Naive thymus-derived CD4-positive, alpha-beta T cell (primary cell): ENCODE measurements at regions of chr1 and their contacts with region 1.

Region 1: DNA sequence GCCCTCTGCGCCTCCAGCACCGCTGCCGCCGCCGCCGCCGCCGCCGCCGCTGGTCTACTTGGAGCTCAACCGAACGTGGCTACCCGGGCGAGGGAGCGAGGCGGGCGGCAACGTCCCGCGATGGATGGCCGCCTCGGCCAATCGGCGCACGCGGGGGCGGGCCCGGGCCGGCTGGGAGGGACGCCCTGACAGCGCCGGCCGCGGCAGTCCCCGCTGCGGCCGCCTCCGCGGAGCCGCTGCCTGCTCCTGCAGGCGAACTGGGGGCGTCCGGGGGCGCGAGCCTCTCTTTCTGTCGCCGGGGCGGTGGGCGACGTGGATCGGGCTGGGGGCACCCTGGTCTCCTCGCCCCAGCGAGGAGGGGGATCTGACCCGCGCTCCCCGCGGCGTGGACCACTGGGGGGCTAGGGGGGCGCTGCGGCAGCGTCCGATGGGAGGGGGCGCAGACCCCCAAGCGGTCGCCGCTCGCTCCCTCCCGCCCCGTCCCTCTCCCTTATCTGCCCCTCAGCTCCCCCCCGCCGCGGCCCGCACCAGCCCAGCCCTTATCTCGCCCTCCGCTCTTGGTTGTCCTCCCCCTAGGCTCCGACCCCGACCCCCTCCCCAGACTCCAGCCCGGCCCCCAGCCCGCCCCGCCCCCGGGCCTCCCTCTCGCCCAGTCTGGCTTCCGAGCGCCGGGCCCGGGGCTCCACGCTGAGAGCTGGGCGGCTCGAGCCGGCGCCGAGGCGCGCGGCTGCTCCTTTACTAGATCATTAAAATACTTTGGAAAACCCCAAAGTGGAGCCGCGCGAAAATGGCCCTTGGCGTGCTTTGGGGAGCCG is at the start of gene SSBP3:
- DNase-seq: peak; percentile 89 to 96 (median 93)
- ATAC-seq: peak; percentile 95
- H3K4me3 ChIP-seq: peak within 1 kb of the TSS; percentile 76
- H3K4me3 Mint-ChIP-seq: peak within 1 kb of the TSS; percentile 92 to 99 (median 96)
- H3K27ac ChIP-seq: peak within 1 kb of the TSS; percentile 93
- H3K27ac Mint-ChIP-seq: peak within 1 kb of the TSS; percentile 84 to 97 (median 91)
- H3K4me1 ChIP-seq: peaks cover 40 to 44% of the 10 kb centered on the region in 2 donors
- H3K4me1 Mint-ChIP-seq: peaks cover 59 to 74% (median 69%) of the 10 kb centered on the region in 7 donors
- H3K27me3 ChIP-seq: no peaks in the 10 kb centered on the region
- H3K27me3 Mint-ChIP-seq: no peaks in the 10 kb centered on the region
- total RNA-seq, gene SSBP3: 69.4 to 124 (median 98.1) TPM

Region 2: DNA sequence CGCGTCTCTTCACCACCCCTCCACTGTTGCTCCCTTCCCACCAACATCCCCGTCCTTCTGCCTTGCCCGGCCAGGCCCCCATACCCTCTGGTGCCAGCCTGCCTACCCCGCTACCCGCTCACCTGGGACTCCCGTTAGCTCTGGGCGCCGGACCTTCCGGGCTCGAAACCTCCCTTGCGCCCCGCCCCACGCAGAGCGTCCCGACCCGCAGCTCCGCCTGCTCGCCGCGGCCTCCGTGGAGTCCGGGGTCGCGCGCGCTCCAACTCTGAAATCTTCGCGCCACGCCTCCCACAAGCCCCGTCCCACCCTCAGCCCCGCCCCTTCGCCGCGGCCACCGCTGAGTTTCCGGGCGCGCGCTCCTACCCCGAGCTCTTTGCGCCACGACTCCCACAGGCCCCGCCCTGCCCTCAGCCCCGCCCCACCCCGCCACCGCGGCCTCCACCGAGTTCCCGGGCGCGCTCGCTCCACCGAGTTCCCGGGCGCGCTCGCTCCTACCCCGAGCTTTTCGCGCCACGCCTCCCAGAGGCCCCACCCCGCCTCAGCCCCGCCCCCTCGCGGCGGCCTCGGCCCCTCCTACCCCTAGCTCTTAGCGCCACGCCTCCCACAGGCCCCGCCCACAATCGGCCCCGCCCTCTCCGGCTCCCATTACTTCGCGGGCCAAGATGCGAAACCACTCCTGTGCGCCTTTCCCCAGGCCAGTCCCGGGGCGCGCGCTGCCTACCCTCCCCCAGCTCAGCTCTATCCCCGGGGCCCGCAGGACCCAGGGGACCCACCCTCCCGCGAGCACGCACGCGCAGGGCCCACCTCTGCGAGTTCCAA is 460.9 kb before region 1 on chr1 and contains the start of gene IFT25:
- CTCF ChIA-PET with region 1: no interaction called
- POLR2A ChIA-PET with region 1: no interaction called
- intact Hi-C with region 1: loop called (anchors 2 kb)
- DNase-seq: peak; percentile 96 to 100 (median 99)
- ATAC-seq: peak; percentile 92
- H3K4me3 ChIP-seq: peak within 1 kb of the TSS; percentile 70
- H3K4me3 Mint-ChIP-seq: peak within 1 kb of the TSS; percentile 91 to 97 (median 96)
- H3K27ac ChIP-seq: peak within 1 kb of the TSS; percentile 83
- H3K27ac Mint-ChIP-seq: peak within 1 kb of the TSS; percentile 83 to 96 (median 93)
- H3K4me1 ChIP-seq: peaks cover 17 to 30% of the 10 kb centered on the region in 2 donors
- H3K4me1 Mint-ChIP-seq: peaks cover 33 to 64% (median 56%) of the 10 kb centered on the region in 7 donors
- H3K27me3 ChIP-seq: no peaks in the 10 kb centered on the region
- H3K27me3 Mint-ChIP-seq: no peaks in the 10 kb centered on the region
- total RNA-seq, gene IFT25: 17.5 to 59.9 (median 41.3) TPM

Region 3: DNA sequence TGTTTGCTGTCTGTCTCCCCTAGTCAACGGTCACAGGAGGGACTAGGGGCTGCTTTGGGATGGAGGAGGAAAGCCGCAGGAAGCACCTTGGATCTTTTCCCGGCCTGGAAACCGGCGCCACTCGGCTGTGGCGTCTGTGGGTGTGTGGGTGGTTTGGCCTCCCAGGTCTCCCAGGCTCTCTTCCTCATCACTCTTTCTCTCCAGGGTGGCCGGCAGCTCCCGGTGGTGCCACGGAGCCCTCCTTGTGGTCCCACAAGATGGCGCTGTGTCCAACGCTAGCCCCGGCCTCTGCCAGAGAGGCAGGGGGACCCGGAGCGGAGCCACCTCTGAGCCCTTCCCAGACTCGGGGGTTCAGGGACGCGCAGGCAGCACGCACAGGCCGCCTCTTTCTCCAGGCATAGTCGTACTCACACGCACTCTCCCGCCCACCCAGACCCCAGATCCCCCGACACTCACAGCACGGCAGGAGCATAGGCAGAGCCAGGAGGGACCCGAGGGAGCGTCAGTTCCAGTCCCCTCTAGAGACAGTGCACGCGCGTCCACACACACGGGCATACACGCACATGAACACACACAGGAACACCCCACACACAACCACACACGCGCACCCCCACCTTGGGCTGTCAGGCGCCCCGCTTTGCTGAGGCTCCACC is 284.9 kb before region 1 on chr1:
- CTCF ChIA-PET with region 1: interaction called, 4 read pairs
- POLR2A ChIA-PET with region 1: no interaction called
- intact Hi-C with region 1: loop called (anchors 1 kb)
- DNase-seq: peak; percentile 42 to 75 (median 60)
- ATAC-seq: peak; percentile 81
- H3K4me3 ChIP-seq: no peak overlapping the region
- H3K4me3 Mint-ChIP-seq: peak overlapping the region in 8 of 10 donors; percentile 39 to 74 (median 68)
- H3K27ac ChIP-seq: no peak overlapping the region
- H3K27ac Mint-ChIP-seq: peak overlapping the region in 2 of 9 donors; percentile 14 to 67
- H3K4me1 ChIP-seq: no peaks in the 10 kb centered on the region
- H3K4me1 Mint-ChIP-seq: peaks cover 0 to 13% (median 6%) of the 10 kb centered on the region in 7 donors
- H3K27me3 ChIP-seq: no peaks in the 10 kb centered on the region
- H3K27me3 Mint-ChIP-seq: peaks cover 0 to 7% (median 0%) of the 10 kb centered on the region in 5 donors

Region 4: GRCh38 chr1:54355931-54356679 is 50.4 kb before region 1 on chr1:
- CTCF ChIA-PET with region 1: interaction called, 3 read pairs
- POLR2A ChIA-PET with region 1: interaction called, 3 read pairs
- intact Hi-C with region 1: loop called (anchors 1 kb)
- DNase-seq: peak in 7 of 9 donors; percentile 7 to 31 (median 24)
- ATAC-seq: peak; percentile 12
- H3K4me3 ChIP-seq: peak overlapping the region; percentile 56
- H3K4me3 Mint-ChIP-seq: peak overlapping the region; percentile 86 to 98 (median 91)
- H3K27ac ChIP-seq: peak overlapping the region; percentile 76
- H3K27ac Mint-ChIP-seq: peak overlapping the region; percentile 87 to 99 (median 97)
- H3K4me1 ChIP-seq: peaks cover 3 to 67% of the 10 kb centered on the region in 2 donors
- H3K4me1 Mint-ChIP-seq: peaks cover 72 to 97% (median 94%) of the 10 kb centered on the region in 7 donors
- H3K27me3 ChIP-seq: no peaks in the 10 kb centered on the region
- H3K27me3 Mint-ChIP-seq: no peaks in the 10 kb centered on the region

Region 5: DNA sequence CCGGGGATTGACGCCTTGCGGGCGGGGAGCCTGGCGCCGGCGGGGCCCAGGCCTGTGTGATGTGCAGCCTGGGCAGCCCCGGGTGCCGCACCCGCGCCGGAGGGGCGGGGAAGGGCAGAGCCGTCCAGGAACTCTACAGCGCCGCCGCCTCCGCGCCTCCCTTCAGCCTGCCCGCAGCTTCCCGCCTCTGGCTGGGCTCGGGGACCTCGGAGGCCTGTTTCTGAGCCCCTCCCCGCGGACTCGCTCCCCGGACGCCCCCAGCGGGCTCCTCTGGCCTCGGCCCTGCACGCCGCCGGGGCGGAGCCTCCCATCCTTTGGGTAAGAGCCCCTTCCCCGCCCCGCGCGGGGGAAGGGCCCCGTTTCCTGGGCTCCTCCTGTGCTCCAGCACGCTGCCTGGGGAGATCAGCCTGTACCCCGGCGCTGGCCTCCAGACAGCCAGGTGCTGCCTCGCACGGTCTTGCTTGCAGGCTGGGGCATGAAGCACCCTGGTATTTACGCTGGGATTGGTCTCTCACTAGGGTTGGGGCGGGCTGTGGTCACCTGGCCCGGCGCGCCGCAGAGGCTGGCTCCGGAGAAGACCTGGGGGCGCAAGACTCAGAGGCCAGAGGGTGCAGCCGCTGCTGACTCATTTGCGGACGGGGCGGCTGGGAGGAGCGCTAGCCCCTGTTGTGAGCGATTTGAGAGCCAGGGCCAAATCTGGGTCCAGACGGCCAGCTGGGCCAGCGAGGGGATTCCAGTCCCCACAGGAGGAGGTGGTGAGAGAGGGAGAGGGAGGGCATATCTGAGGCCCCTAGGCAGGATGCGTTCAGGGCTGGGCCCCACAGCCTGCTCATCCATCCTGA is 135.8 kb after region 1 on chr1:
- CTCF ChIA-PET with region 1: no interaction called
- POLR2A ChIA-PET with region 1: no interaction called
- intact Hi-C with region 1: loop called (anchors 2 to 5 kb)
- DNase-seq: peak; percentile 26 to 72 (median 44)
- ATAC-seq: peak; percentile 90
- H3K4me3 ChIP-seq: peak overlapping the region; percentile 54
- H3K4me3 Mint-ChIP-seq: peak overlapping the region; percentile 66 to 87 (median 82)
- H3K27ac ChIP-seq: no peak overlapping the region
- H3K27ac Mint-ChIP-seq: peak overlapping the region in 6 of 9 donors; percentile 15 to 92 (median 58)
- H3K4me1 ChIP-seq: peaks cover 0 to 6% of the 10 kb centered on the region in 2 donors
- H3K4me1 Mint-ChIP-seq: peaks cover 12 to 22% (median 20%) of the 10 kb centered on the region in 7 donors
- H3K27me3 ChIP-seq: no peaks in the 10 kb centered on the region
- H3K27me3 Mint-ChIP-seq: peaks cover 0 to 27% (median 0%) of the 10 kb centered on the region in 5 donors

Region 6: GRCh38 chr1:55215256-55216021 is 808.9 kb after region 1 on chr1 and contains the start of gene USP24:
- CTCF ChIA-PET with region 1: no interaction called
- POLR2A ChIA-PET with region 1: no interaction called
- intact Hi-C with region 1: loop called in 1 of 2 experiments (anchors 5 kb)
- DNase-seq: peak; percentile 81 to 88 (median 86)
- ATAC-seq: peak; percentile 93
- H3K4me3 ChIP-seq: peak within 1 kb of the TSS; percentile 66
- H3K4me3 Mint-ChIP-seq: peak within 1 kb of the TSS; percentile 75 to 97 (median 95)
- H3K27ac ChIP-seq: peak within 1 kb of the TSS; percentile 93
- H3K27ac Mint-ChIP-seq: peak within 1 kb of the TSS; percentile 93 to 99 (median 98)
- H3K4me1 ChIP-seq: peaks cover 38 to 48% of the 10 kb centered on the region in 2 donors
- H3K4me1 Mint-ChIP-seq: peaks cover 55 to 75% (median 64%) of the 10 kb centered on the region in 7 donors
- H3K27me3 ChIP-seq: no peaks in the 10 kb centered on the region
- H3K27me3 Mint-ChIP-seq: no peaks in the 10 kb centered on the region
- total RNA-seq, gene USP24: 47.3 to 91.4 (median 75.4) TPM